ENCODE measurements at regions of chr11 and their contacts with region 1.

Region 1: DNA sequence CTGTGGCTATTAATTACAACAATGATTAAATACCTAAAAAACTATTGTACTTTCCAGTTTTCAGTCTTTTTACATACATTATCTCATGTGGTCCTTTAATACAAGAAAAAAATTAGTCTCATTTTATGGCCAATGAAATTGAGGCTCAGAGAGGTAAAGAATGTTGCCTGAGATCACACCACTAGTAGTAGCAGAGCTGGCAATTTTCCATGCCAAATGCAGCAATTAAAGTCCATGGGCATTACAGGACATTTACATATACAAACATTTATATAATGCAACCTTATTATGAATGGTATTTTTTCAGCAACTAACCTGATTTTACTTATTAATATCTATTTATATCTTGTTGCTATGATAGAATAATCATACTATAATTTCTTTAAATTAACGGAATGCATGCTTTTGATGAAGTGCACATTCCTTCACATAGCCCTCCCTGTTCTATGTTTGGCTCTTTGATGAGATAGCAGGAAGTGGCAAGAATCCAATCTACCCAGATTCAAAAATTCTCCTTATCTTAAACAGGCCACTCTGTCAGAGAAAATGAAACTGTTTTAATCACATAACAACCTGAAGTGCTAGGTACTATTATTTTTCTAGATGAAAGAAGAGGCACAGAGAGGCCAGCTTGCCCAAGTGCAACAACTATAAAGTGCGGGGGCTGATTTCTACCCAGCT is 120.9 kb upstream of the LDLRAD3 start:
- DNase-seq: no peak
- H3K4me3 ChIP-seq: no peak overlapping the region
- H3K27ac ChIP-seq: no peak overlapping the region
- H3K4me1 ChIP-seq: peaks cover 3% of the 10 kb centered on the region
- H3K27me3 ChIP-seq: no peaks in the 10 kb centered on the region
- CTCF ChIP-seq: no peak

Region 2: DNA sequence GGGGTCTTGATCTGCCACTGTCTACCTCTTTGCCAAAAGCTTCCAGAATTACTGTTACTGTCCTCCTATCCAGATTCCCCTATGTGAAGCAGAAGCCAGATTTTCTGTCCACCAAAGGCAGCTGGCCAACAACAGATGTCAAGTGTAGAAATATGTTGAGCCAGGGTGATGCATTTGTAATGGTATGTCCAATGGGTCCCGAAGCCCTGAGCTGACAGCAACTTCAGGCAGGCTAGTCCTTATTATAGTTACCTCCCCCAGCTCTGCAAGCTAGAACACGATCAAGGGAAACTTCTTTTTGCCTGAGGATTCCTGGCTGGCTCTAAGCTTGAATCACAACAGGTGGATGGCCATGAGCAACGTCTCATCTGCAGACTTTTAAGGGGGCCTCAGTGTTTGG is 307.7 kb before region 1 on chr11:
- CTCF ChIA-PET with region 1: interaction called, 36 read pairs
- dilution Hi-C with region 1: no loop called
- in situ Hi-C with region 1: no loop called
- intact Hi-C with region 1: no loop called
- DNase-seq: peak; percentile 93
- H3K4me3 ChIP-seq: no peak overlapping the region
- H3K27ac ChIP-seq: no peak overlapping the region
- H3K4me1 ChIP-seq: peaks cover 39% of the 10 kb centered on the region
- H3K27me3 ChIP-seq: no peaks in the 10 kb centered on the region
- CTCF ChIP-seq: no peak

Region 3: GRCh38 chr11:35932681-35933319 is 109.8 kb after region 1 on chr11:
- CTCF ChIA-PET with region 1: interaction called, 18 read pairs
- dilution Hi-C with region 1: no loop called
- in situ Hi-C with region 1: no loop called
- intact Hi-C with region 1: no loop called
- DNase-seq: peak; percentile 66
- H3K4me3 ChIP-seq: no peak overlapping the region
- H3K27ac ChIP-seq: no peak overlapping the region
- H3K4me1 ChIP-seq: peaks cover 27% of the 10 kb centered on the region
- H3K27me3 ChIP-seq: no peaks in the 10 kb centered on the region
- CTCF ChIP-seq: no peak

Region 4: GRCh38 chr11:36073411-36074203 is 250.7 kb after region 1 on chr11:
- CTCF ChIA-PET with region 1: interaction called, 47 read pairs
- dilution Hi-C with region 1: no loop called
- in situ Hi-C with region 1: no loop called
- intact Hi-C with region 1: loop called (anchors 1 kb)
- DNase-seq: peak; percentile 30
- H3K4me3 ChIP-seq: no peak overlapping the region
- H3K27ac ChIP-seq: no peak overlapping the region
- H3K4me1 ChIP-seq: peaks cover 18% of the 10 kb centered on the region
- H3K27me3 ChIP-seq: no peaks in the 10 kb centered on the region
- CTCF ChIP-seq: no peak

Region 5: DNA sequence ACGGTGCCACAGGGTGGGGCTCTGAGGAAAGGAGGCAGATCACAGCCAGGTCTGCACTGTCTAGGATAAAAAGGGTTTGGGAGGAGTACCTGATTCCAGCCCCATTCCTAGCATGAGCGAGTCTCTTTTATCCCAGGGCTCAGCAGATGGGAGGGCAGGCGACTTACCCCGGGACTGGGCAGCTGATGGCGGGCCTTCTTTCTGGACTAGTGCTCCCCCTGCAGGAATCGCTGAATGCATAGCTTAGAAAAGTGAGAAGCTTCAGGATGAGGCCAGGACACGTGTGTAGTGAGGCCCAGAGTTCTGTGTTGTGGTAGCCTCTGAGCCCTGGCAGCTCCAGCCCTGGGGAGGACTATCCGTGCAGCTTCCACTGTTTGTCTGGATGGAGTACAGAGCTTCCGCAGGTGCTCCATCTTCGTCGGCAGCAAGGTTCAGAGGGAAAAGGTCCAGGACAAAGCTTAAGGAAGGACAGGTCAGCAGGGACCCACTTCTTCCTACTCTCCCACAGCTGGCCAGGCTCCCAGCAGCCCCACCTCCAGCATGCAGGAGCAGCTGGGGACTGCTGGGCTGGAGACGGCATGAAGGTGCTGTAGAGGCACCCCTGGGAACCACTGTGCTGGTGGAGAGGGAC is 435.9 kb after region 1 on chr11:
- CTCF ChIA-PET with region 1: interaction called, 21 read pairs
- dilution Hi-C with region 1: no loop called
- in situ Hi-C with region 1: loop called (anchors 10 kb)
- intact Hi-C with region 1: no loop called
- DNase-seq: peak; percentile 35
- H3K4me3 ChIP-seq: no peak overlapping the region
- H3K27ac ChIP-seq: no peak overlapping the region
- H3K4me1 ChIP-seq: peaks cover 9% of the 10 kb centered on the region
- H3K27me3 ChIP-seq: no peaks in the 10 kb centered on the region
- CTCF ChIP-seq: peak; percentile 36 to 47

Region 6: DNA sequence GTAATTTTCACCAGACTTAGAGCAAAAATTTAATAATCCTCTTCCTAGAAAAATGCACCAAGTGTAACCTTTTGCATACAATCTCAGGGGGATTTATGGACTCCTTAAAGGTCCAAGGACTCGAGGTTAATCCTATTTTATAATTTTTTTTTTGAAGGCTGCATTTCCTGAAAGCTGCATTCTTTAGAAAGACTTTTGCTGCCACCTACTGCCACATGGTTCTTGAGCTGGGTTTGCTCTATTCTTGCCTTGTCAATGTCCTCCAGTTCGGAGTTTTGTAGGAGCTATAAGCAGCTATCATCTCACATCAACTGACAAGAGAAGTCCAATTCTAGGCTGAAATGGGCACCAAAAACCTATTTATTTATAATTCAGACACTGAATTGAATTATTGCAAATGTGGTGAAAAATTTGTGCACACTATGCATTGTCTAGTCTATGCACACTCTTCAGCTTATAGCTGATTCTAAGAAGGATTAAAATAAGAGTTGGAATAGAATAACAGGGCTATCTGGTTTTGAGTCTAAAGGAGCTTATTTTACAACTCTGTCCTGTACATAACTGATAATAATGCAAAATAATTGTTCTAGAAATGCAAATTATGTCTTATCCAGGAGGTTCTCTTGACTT is 655.9 kb after region 1 on chr11:
- CTCF ChIA-PET with region 1: no interaction called
- dilution Hi-C with region 1: no loop called
- in situ Hi-C with region 1: no loop called
- intact Hi-C with region 1: loop called (anchors 10 kb)
- DNase-seq: peak; percentile 27
- H3K4me3 ChIP-seq: no peak overlapping the region
- H3K27ac ChIP-seq: no peak overlapping the region
- H3K4me1 ChIP-seq: peaks cover 4% of the 10 kb centered on the region
- H3K27me3 ChIP-seq: no peaks in the 10 kb centered on the region
- CTCF ChIP-seq: peak; percentile 57 to 65

Measured in mammary epithelial cell (primary cell).